ENCODE measurements at regions of chr2 and their contacts with region 1.

Region 1: GRCh38 chr2:238513346-238513745 is 86.6 kb downstream of the ASB1 start:
- DNase-seq: peak; percentile 80
- ATAC-seq: peak; percentile 55
- H3K4me3 Mint-ChIP-seq: no peak overlapping the region
- H3K27ac Mint-ChIP-seq: no peak overlapping the region
- H3K4me1 Mint-ChIP-seq: peaks cover 22% of the 10 kb centered on the region
- H3K27me3 Mint-ChIP-seq: no peaks in the 10 kb centered on the region
- CTCF ChIP-seq: peak; percentile 74

Region 2: DNA sequence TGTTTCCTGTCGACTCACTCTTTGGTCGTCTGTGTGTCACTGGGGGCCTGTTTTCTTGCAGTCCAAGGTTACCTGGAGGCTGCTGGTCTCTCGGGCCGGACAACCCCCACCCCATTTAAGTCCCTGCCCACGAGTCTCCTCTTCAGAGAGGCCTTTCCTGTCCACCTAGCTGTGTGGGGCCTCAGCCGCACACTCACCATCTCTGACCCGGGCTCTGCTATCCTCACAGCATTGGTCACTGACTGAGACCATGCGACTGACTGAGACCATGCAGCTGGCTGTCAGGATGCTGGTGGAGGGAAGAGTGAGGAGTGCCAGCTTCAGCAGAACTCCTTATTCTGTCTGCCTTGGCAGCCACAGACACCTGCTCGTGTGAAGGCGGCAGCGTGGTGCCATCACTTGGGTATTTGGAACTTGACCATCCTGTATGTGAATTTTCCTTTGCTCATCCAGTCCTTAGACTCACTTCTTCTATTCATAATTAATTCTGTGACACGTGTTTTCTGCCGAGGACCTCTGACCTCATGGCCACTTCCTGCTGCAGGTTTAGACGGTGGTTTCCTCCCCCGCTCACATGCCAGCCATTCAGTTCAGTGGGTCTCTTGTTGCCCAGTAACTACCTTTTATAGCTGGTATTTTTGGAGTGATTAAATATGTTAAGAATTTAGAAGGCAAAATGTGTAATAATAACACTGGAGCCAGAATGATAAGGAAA is 134.1 kb before region 1 on chr2:
- CTCF ChIA-PET with region 1: no interaction called
- POLR2A ChIA-PET with region 1: no interaction called
- DNase-seq: no peak
- ATAC-seq: no peak
- H3K4me3 Mint-ChIP-seq: no peak overlapping the region
- H3K27ac Mint-ChIP-seq: no peak overlapping the region
- H3K4me1 Mint-ChIP-seq: peaks cover 19% of the 10 kb centered on the region
- H3K27me3 Mint-ChIP-seq: no peaks in the 10 kb centered on the region
- CTCF ChIP-seq: no peak

Region 3: GRCh38 chr2:238499731-238500580 is 13.4 kb before region 1 on chr2:
- CTCF ChIA-PET with region 1: interaction called, 14 read pairs
- POLR2A ChIA-PET with region 1: no interaction called
- DNase-seq: no peak
- ATAC-seq: no peak
- H3K4me3 Mint-ChIP-seq: no peak overlapping the region
- H3K27ac Mint-ChIP-seq: no peak overlapping the region
- H3K4me1 Mint-ChIP-seq: no peaks in the 10 kb centered on the region
- H3K27me3 Mint-ChIP-seq: no peaks in the 10 kb centered on the region
- CTCF ChIP-seq: no peak

Region 4: GRCh38 chr2:238523158-238524110 is 10.1 kb after region 1 on chr2:
- CTCF ChIA-PET with region 1: interaction called, 33 read pairs
- POLR2A ChIA-PET with region 1: no interaction called
- DNase-seq: peak; percentile 71
- ATAC-seq: peak; percentile 97
- H3K4me3 Mint-ChIP-seq: no peak overlapping the region
- H3K27ac Mint-ChIP-seq: no peak overlapping the region
- H3K4me1 Mint-ChIP-seq: peaks cover 9% of the 10 kb centered on the region
- H3K27me3 Mint-ChIP-seq: no peaks in the 10 kb centered on the region; the same call in 1 of the 2 replicates
- CTCF ChIP-seq: no peak

Region 5: DNA sequence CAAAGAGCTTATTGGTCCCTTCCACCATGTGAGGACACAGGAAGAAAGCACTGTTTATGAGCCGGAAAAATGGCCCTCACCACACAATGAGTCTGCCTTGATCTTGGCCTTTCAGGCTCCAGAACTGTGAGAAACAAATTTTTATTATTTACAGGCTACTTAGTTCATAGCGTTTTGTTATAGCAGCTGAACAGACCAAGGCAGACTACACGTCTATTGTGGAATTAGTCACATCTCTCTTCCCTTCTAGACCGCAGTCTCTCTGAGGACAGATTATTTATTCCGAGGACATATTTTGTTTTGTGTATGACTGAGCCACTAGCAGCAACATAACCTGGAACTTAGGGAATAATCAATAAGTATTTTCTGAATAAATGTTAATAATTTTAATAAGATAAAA is 38.9 kb after region 1 on chr2:
- CTCF ChIA-PET with region 1: no interaction called
- POLR2A ChIA-PET with region 1: no interaction called
- DNase-seq: no peak
- ATAC-seq: no peak
- H3K4me3 Mint-ChIP-seq: no peak overlapping the region
- H3K27ac Mint-ChIP-seq: no peak overlapping the region
- H3K4me1 Mint-ChIP-seq: peaks cover 7% of the 10 kb centered on the region
- H3K27me3 Mint-ChIP-seq: peaks cover 18% of the 10 kb centered on the region
- CTCF ChIP-seq: no peak

Region 6: GRCh38 chr2:238573065-238573778 is 59.9 kb after region 1 on chr2:
- CTCF ChIA-PET with region 1: interaction called, 17 read pairs
- POLR2A ChIA-PET with region 1: no interaction called
- DNase-seq: peak; percentile 66
- ATAC-seq: peak; percentile 89
- H3K4me3 Mint-ChIP-seq: no peak overlapping the region
- H3K27ac Mint-ChIP-seq: no peak overlapping the region
- H3K4me1 Mint-ChIP-seq: no peaks in the 10 kb centered on the region
- H3K27me3 Mint-ChIP-seq: no peaks in the 10 kb centered on the region
- CTCF ChIP-seq: peak; percentile 93

Region 7: GRCh38 chr2:238784671-238785527 is 271.6 kb after region 1 on chr2:
- CTCF ChIA-PET with region 1: interaction called, 11 read pairs
- POLR2A ChIA-PET with region 1: no interaction called
- DNase-seq: peak; percentile 76
- ATAC-seq: peak; percentile 86
- H3K4me3 Mint-ChIP-seq: no peak overlapping the region
- H3K27ac Mint-ChIP-seq: no peak overlapping the region
- H3K4me1 Mint-ChIP-seq: peaks cover 16% of the 10 kb centered on the region
- H3K27me3 Mint-ChIP-seq: no peaks in the 10 kb centered on the region
- CTCF ChIP-seq: peak; percentile 78